Activated CD4-positive, alpha-beta T cell treated with anti-CD3 and anti-CD28 coated beads, Interleukin-2, amount 10 ng/mL, durations not matched to agents 7 days and 5 days (primary cell): ENCODE measurements at regions of chr1 and their contacts with region 1.

Region 1: GRCh38 chr1:48610628-48611542 is 138.9 kb upstream of the SPATA6 start:
- DNase-seq: no peak
- H3K4me3 Mint-ChIP-seq: no peak overlapping the region
- H3K27ac Mint-ChIP-seq: no peak overlapping the region
- H3K4me1 Mint-ChIP-seq: no peaks in the 10 kb centered on the region
- H3K27me3 Mint-ChIP-seq: peaks cover 4% of the 10 kb centered on the region

Region 2: DNA sequence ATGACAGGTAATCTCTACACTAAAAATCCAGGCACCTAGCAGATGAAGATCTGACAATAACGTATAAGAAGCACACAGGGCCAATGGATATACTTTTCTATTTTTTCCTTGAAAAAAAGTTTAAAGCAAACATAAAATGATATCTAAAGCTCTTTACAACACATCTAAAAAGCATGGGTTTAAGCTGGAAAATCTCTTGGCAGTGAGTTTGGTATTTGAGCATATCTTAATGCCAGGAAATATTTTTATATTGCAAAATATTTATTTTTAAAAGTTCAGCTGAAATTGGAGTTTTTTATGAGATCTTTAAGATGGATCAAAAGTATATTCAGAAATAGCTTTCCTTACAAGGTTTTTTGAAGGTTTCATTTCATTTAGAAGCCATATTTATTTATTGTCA is 347.8 kb before region 1 on chr1:
- CTCF ChIA-PET with region 1: no interaction called
- POLR2A ChIA-PET with region 1: interaction called, 10 read pairs
- DNase-seq: no peak
- H3K4me3 Mint-ChIP-seq: no peak overlapping the region
- H3K27ac Mint-ChIP-seq: no peak overlapping the region
- H3K4me1 Mint-ChIP-seq: no peaks in the 10 kb centered on the region
- H3K27me3 Mint-ChIP-seq: peaks cover 8% of the 10 kb centered on the region

Region 3: DNA sequence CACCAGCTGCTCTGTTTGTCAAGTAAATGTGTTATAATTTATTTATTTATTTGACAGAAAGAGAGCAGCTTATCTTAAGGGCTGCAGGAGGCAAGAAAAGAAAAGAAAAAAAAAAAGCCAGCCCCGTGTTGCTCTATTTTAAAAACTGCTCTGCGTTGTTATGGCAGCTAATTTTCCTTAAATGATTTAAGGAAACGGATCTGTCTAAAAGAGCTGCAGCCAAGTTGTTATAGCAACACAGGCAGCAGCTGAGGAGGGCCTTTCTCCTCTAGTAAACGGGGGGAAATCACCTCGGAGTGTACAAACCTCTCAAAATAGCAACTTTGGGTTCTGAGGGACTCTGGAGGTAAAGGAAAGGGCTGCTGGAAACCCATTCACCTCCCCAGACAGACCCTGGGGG is 16.6 kb after region 1 on chr1:
- CTCF ChIA-PET with region 1: no interaction called
- POLR2A ChIA-PET with region 1: no interaction called
- DNase-seq: no peak
- H3K4me3 Mint-ChIP-seq: no peak overlapping the region
- H3K27ac Mint-ChIP-seq: no peak overlapping the region
- H3K4me1 Mint-ChIP-seq: no peaks in the 10 kb centered on the region
- H3K27me3 Mint-ChIP-seq: peaks cover 10% of the 10 kb centered on the region